Posterior cingulate gyrus (tissue), 11 donors: ENCODE measurements at regions of chr14 and their contacts with region 1.

Region 1: GRCh38 chr14:50085570-50086320 is 30.6 kb downstream of the VCPKMT start:
- DNase-seq: peak in 5 of 10 donors; percentile 22 to 85 (median 68)

Region 2: DNA sequence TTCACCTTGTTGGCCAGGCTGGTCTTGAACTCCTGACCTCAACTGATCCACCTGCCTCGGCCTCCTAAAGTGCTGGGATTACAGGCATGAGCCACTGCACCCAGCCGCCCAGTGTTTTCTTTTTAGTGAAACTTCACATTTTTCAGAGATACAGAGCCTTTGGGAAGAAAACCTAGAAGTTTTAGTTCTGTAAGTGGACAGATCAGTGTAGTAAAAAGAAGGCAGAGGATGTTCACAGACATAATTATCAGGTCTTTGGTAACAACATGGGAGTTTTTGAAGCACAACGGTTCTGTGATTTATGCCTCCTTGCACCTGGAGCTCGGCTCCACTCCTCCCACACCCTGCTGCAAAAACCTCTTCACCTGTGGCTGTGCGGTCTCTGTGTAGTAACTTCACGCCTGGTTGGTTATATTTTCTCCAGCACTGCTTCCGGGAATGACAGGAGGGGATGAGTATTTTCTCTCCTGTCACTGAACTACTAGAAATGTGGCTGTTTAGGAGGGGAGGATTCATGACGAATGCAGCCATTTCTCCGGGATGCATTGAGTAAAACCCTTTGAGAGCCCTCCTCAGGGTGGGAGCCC is 125.8 kb before region 1 on chr14:
- intact Hi-C with region 1: loop called (anchors 10 kb)
- DNase-seq: no peak